Motor neuron (in vitro differentiated cells): ENCODE measurements at regions of chr18 and their contacts with region 1.

Region 1: GRCh38 chr18:61322265-61322873 is 10.9 kb upstream of the CDH20 start:
- ATAC-seq: peak in 6 of 8 experiments; percentile 40 to 99 (median 92)
- H3K4me3 ChIP-seq: no peak overlapping the region
- H3K27ac ChIP-seq: no peak overlapping the region
- H3K4me1 ChIP-seq: no peaks in the 10 kb centered on the region

Region 2: DNA sequence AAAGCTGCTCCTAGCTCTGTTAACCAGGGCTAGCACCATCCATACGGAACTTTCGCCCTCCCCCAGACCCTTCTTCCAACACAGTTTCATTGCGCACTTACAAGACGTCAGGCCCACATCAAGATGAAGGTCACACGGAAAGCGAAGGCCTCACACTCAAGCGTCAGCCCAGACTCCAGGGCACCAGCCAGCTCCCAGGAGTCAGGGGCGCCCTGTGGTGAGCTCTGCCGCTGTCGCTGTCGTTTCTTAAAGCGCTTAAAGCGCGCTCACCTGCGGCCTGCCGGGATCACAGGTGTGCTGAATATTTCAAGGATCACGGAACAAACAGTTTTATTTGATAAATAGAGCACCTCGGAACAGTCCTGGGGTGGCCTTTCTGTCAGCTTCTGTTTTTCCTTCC is 174.0 kb after region 1 on chr18:
- in situ Hi-C with region 1: loop called in 2 of 9 experiments (anchors 10 to 25 kb)
- ATAC-seq: no peak
- H3K4me3 ChIP-seq: no peak overlapping the region
- H3K27ac ChIP-seq: no peak overlapping the region
- H3K4me1 ChIP-seq: peaks cover 5 to 12% of the 10 kb centered on the region in 2 donors

Region 3: GRCh38 chr18:61569176-61569892 is 247.0 kb after region 1 on chr18:
- in situ Hi-C with region 1: no loop called
- ATAC-seq: no peak
- H3K4me3 ChIP-seq: no peak overlapping the region
- H3K27ac ChIP-seq: no peak overlapping the region
- H3K4me1 ChIP-seq: no peaks in the 10 kb centered on the region

Region 4: DNA sequence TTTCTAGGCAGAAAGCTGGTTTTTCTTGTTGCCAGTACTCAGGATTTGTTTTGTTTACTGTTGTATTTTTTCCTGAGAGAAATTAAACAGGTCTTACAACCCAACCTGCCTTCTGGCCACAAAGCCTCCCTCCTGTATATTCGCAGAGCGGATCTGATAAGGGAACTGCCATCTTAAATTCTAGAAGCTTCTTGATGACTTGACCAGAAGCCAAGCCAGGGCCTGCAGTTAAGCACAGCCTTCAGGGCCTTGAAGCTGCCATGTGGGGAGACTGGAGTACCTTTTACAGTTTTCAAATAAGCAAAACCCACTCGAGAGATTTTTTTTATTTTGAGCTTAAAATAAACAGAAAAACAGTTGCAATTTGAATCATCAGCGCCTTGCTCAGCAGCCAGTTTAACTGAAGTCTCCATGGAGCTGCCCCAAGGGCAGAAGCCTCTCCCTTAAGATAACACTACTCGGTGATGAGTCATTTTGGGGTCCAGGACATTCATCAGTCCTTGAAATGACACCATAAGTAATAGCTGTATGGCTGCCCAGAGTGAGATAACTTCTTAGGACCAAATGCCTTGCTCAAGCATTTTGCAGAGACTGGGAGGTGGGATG is 1341.5 kb after region 1 on chr18:
- in situ Hi-C with region 1: no loop called
- ATAC-seq: peak; percentile 64 to 92 (median 86)
- H3K4me3 ChIP-seq: no peak overlapping the region
- H3K27ac ChIP-seq: no peak overlapping the region
- H3K4me1 ChIP-seq: no peaks in the 10 kb centered on the region